Heart left ventricle (tissue), 16 donors: ENCODE measurements at regions of chr2 and their contacts with region 1.

Region 1: DNA sequence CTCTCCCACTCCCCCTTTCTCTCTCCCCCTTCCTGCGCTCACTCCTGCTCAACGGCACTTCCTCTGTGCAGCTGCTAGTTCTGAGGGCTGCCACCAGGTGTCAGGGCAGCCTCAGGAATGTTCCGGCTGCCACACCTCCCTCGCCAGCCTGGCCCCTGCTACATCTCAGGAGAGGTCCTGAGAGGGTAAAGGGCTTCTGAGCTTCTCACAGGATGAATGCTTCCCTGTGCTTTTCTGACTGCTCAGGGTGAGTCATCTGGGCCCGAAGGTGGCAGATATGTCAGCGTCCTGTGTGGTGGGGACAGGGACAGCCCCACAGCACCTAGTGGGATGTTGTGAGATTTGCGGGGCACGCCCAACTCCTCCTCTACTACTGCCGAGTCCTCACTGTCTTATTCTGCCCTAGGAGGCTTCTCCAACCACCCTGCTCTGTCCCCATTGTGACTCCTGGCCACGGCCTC is 49.0 kb downstream of the PLEKHB2 start:
- DNase-seq: peak in 3 of 5 donors; percentile 54 to 74 (median 58)
- ATAC-seq: peak; percentile 72 to 90 (median 84)
- H3K4me3 ChIP-seq: no peak overlapping the region
- H3K27ac ChIP-seq: no peak overlapping the region
- H3K4me1 ChIP-seq: peaks cover 0 to 4% (median 0%) of the 10 kb centered on the region in 12 donors
- H3K27me3 ChIP-seq: no peaks in the 10 kb centered on the region
- CTCF ChIP-seq: peak; percentile 51 to 85 (median 73)
- POLR2A ChIP-seq: no peak

Region 2: DNA sequence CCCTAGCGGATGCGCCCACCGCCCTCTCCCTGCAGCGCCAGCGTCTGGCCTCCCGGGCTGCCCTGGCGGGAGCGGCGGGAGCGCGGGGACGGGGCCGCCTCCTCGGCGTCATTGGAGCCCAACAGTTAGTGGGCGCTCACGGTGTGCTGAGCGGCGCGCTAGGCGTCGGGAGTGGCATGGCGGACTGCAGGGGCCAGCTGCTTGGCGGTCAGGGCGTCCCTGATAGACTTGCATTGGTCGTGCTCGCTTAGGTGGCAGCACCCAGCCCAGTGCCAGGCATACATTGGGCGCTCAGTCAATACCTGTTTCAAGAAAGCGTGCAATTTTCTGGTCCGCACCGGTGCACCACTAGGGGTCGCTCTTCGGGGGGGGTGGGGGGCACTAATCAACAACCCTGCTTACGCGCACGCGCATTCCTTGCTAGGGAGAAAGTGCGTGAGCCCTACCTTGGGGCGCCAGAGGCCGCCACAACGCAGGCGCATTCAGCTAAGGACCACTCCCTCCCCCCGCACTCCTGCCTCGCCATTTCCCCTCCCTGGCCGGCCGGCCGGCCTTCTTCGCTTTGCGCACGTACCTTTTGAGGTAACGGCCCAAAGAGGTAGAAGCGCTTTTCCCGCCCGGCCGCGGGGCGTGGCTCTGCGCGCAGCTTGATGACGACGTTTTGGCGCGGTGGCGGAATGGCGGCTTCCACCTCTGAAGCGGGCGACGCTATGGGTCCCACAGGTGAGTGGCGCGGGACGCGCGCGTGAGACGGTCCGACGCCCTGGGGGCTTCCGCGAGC is 338.5 kb after region 1 on chr2:
- intact Hi-C with region 1: loop called in 1 of 10 experiments (anchors 10 kb)
- DNase-seq: peak; percentile 92 to 96 (median 93)
- ATAC-seq: peak; percentile 86 to 96 (median 88)
- H3K4me3 ChIP-seq: peak overlapping the region; percentile 65 to 97 (median 84)
- H3K27ac ChIP-seq: peak overlapping the region; percentile 82 to 96 (median 88)
- H3K4me1 ChIP-seq: peaks cover 2 to 63% (median 24%) of the 10 kb centered on the region in 12 donors
- H3K27me3 ChIP-seq: no peaks in the 10 kb centered on the region
- CTCF ChIP-seq: peak; percentile 56 to 87 (median 75)
- POLR2A ChIP-seq: peak in 1 of 2 donors; percentile 59

Region 3: DNA sequence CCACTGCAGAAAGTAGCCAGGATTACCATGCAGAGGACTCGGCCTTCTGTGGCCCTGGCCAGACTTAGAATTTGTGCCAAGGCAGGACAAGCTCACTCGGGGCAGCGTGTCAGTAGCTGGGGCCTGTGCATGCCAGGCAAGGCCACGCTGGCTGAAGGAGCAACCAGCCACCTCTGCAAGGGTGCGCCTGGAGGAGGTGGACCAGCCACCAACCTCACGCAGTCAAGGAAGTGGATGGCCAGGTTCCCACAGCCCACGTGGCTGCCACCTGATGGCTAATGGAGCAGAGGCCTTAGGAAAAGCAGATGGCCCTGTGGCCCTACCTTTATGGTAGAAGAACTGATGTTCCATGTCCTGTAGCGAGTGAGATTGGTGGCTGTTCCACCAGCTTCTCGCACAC is 481.5 kb after region 1 on chr2:
- intact Hi-C with region 1: no loop called
- DNase-seq: no peak
- ATAC-seq: no peak
- H3K4me3 ChIP-seq: no peak overlapping the region
- H3K27ac ChIP-seq: no peak overlapping the region
- H3K4me1 ChIP-seq: no peaks in the 10 kb centered on the region
- H3K27me3 ChIP-seq: no peaks in the 10 kb centered on the region
- CTCF ChIP-seq: no peak
- POLR2A ChIP-seq: no peak

Region 4: DNA sequence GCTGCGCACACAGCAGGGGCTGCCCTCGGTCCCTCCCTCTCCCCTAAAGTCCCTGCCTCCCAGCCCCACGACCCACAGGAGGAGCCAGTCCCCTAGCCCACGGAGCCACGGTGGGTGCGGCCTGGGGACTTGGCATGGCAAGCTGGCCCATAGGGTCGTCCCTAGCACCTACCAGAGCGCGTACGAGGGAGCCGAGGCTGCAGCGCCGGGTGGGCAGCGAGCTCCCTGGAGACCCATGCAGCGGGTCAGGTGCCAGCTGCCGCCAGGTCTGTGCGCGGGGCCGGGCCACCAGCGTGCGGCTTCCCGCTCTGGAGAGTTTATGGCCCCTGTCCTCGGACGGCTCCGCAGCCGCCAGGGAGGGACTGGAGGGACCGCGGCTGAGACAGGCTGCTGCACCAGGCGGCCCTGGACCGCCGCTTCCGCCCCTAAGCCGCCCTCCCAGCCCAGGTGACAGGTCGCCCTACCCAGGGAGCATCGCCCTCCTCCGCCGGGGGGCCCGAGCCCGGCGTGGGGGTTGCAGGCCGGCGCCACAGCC is 647.2 kb after region 1 on chr2:
- intact Hi-C with region 1: loop called in 5 of 10 experiments (anchors 5 to 10 kb)
- DNase-seq: no peak
- ATAC-seq: no peak
- H3K4me3 ChIP-seq: peak overlapping the region in 6 of 12 donors; percentile 17 to 54 (median 38)
- H3K27ac ChIP-seq: no peak overlapping the region
- H3K4me1 ChIP-seq: peaks cover 0 to 14% (median 2%) of the 10 kb centered on the region in 12 donors
- H3K27me3 ChIP-seq: peaks cover 0 to 8% (median 4%) of the 10 kb centered on the region in 9 donors
- CTCF ChIP-seq: no peak
- POLR2A ChIP-seq: no peak